ENCODE measurements at regions of chr3 and their contacts with region 1.

Region 1: GRCh38 chr3:141441381-141442364 is 45.2 kb upstream of the RASA2 start:
- DNase-seq: peak; percentile 90
- H3K4me3 Mint-ChIP-seq: no peak overlapping the region
- H3K27ac Mint-ChIP-seq: peak overlapping the region; percentile 16
- H3K4me1 Mint-ChIP-seq: peaks cover 13% of the 10 kb centered on the region
- H3K27me3 Mint-ChIP-seq: no peaks in the 10 kb centered on the region

Region 2: DNA sequence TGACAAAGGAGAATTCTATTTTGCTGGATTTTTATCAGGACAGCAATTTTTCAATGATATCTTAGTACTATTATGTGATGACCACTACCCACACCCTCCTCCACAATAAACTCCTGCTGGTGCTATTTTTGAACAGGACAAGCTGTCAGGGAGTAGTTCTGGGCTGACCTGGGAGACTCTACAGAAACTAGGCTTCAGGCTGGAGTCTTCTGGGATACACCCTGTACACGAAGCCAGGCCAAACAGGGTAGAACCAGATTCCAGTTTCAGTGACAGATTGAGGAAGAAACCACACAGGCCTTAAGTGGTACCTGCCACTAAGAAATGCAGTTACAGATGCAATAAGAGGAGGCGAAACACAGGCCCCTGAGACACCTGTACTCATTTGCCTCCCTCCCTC is 1776.7 kb before region 1 on chr3:
- intact Hi-C with region 1: no loop called
- DNase-seq: no peak
- H3K4me3 Mint-ChIP-seq: no peak overlapping the region
- H3K27ac Mint-ChIP-seq: no peak overlapping the region
- H3K4me1 Mint-ChIP-seq: no peaks in the 10 kb centered on the region
- H3K27me3 Mint-ChIP-seq: no peaks in the 10 kb centered on the region

Region 3: GRCh38 chr3:141039589-141039988 is 402.1 kb before region 1 on chr3:
- intact Hi-C with region 1: no loop called
- DNase-seq: no peak
- H3K4me3 Mint-ChIP-seq: no peak overlapping the region
- H3K27ac Mint-ChIP-seq: no peak overlapping the region
- H3K4me1 Mint-ChIP-seq: no peaks in the 10 kb centered on the region
- H3K27me3 Mint-ChIP-seq: peaks cover 17% of the 10 kb centered on the region

Region 4: DNA sequence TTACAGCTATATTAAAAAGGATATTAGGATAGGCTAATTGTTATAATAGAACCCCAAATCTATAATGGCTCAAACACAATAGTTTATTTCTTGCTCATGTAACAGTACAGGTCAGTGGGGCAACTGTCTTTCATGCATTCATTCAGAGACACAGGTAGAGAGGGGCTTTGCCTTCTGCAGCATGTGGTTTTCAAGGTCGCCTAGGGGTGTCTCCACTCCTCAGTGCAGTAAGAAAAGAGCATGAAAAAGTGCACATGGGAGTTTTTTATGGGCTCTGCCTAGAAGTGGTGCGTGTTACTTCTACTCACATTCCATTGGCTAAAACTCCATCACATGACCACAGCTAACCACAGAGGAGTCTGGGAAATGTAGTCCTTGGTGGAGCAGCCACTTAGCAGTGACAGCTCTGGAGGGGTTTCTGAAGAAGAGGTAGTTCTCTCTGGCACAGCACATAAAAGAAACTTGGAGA is 71.6 kb before region 1 on chr3:
- intact Hi-C with region 1: loop called (anchors 1 kb)
- DNase-seq: peak; percentile 89
- H3K4me3 Mint-ChIP-seq: no peak overlapping the region
- H3K27ac Mint-ChIP-seq: no peak overlapping the region
- H3K4me1 Mint-ChIP-seq: peaks cover 20% of the 10 kb centered on the region
- H3K27me3 Mint-ChIP-seq: no peaks in the 10 kb centered on the region

Region 5: DNA sequence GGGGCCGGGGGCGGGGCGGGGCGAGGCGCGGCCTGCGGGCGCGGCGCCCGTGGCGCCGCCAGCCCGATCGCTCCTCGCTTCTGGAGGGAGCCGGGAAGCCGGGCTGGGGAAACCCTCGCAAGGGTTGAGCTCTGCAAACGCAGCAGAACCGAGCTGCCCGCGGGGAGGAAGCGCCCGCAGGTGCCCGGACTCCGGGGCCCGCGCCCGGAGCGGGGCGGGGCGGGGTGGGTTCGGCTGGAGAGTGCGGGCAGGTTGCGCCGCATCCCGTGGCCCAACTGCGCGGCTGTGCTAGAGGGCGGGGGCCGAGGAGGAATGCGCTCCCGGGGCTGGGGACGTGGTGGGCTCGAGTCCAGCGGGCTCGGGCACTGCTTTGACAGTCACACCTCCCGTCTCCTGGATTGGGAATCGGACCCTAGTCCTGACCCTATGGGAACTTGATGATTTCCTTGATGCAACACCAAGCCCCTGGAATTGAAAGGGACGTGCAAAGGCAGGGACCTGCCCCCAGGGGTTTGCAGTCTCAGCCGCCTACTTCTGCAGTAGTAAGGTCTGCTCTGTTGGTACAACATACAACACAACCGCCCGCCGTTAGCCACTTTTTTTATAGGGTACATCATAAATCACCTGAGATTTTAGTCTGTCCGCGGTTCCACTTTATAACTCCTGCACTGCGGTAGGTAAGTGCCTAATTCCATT is 39.0 kb before region 1 on chr3:
- intact Hi-C with region 1: loop called (anchors 5 kb)
- DNase-seq: peak; percentile 85
- H3K4me3 Mint-ChIP-seq: peak overlapping the region; percentile 84
- H3K27ac Mint-ChIP-seq: peak overlapping the region; percentile 75
- H3K4me1 Mint-ChIP-seq: peaks cover 13% of the 10 kb centered on the region
- H3K27me3 Mint-ChIP-seq: no peaks in the 10 kb centered on the region